Ovary (tissue), 10 donors: ENCODE measurements at regions of chr2 and their contacts with region 1.

Region 1: DNA sequence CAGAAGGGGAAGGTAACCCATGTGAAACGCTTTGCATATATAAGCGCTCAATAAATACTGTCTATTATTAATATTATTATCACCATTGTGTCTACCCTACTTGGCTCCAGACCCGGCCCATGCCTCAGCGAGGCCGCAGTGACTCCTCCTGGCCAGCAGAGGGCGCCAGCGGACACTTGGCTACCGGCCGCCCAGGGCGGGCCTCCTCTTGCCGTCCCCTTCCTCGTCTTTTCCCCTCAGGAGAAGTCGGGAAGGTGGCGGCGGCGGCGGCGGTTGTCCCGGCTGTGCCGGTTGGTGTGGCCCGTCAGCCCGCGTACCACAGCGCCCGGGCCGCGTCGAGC is at the start of gene AGFG1:
- DNase-seq: peak; percentile 74 to 91 (median 83)
- H3K4me3 ChIP-seq: peak within 1 kb of the TSS; percentile 69
- H3K27ac ChIP-seq: peak within 1 kb of the TSS; percentile 62 to 85
- H3K4me1 ChIP-seq: peaks cover 5% of the 10 kb centered on the region
- H3K27me3 ChIP-seq: no peaks in the 10 kb centered on the region
- CTCF ChIP-seq: peak; percentile 94 to 99 (median 95)
- EP300 ChIP-seq: no peak
- POLR2A ChIP-seq: peak; percentile 45
- total RNA-seq, gene AGFG1: 21.3 to 78.9 (median 52.2) TPM

Region 2: GRCh38 chr2:227627769-227628168 is 155.9 kb after region 1 on chr2:
- intact Hi-C with region 1: no loop called
- DNase-seq: no peak
- H3K4me3 ChIP-seq: no peak overlapping the region
- H3K27ac ChIP-seq: no peak overlapping the region
- H3K4me1 ChIP-seq: no peaks in the 10 kb centered on the region
- H3K27me3 ChIP-seq: no peaks in the 10 kb centered on the region
- CTCF ChIP-seq: no peak
- EP300 ChIP-seq: no peak
- POLR2A ChIP-seq: no peak

Region 3: GRCh38 chr2:227774895-227775842 is 303.3 kb after region 1 on chr2:
- intact Hi-C with region 1: loop called in 1 of 4 experiments (anchors 5 kb)
- DNase-seq: no peak
- H3K4me3 ChIP-seq: no peak overlapping the region
- H3K27ac ChIP-seq: no peak overlapping the region
- H3K4me1 ChIP-seq: no peaks in the 10 kb centered on the region
- H3K27me3 ChIP-seq: no peaks in the 10 kb centered on the region
- CTCF ChIP-seq: no peak
- EP300 ChIP-seq: no peak
- POLR2A ChIP-seq: no peak